ENCODE measurements at regions of chr9 and their contacts with region 1.

Region 1: DNA sequence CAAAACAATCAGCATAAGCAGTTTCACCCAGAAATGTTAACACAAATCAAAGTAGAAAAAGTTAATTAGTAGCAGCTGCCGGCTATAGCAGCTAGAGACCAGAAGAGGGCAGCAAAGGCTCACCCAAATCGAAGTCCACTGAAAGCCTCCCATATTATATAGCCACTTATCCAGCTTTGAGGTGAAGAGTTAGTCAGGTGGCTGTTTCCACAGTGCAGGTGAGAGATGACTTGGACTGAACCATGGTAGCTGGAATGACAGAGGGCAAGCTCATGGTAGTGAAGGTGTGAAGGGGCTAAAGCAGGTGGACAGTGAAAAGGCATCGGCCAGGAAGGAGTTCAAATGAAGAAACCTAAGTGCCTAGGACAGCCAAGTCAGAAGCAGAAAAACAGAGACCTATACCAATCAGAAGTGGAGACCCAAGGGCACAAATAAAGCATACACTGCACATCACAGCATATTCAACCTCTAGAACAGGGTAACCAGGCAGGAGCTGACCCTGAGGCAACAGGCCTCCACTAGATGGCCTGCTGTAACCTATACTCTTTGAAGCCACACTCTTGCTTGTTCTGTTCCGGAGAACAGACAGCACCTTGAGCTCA is 7.2 kb upstream of the RNF38 start:
- DNase-seq: peak; percentile 65
- ATAC-seq: peak; percentile 97
- H3K4me3 ChIP-seq: no peak overlapping the region
- H3K27ac ChIP-seq: no peak overlapping the region
- H3K4me1 ChIP-seq: no peaks in the 10 kb centered on the region; the same call in 1 of the 2 replicates
- H3K27me3 ChIP-seq: no peaks in the 10 kb centered on the region
- CTCF ChIP-seq: peak; percentile 94
- POLR2A ChIP-seq: no peak
- RAD21 ChIP-seq: peak; percentile 85

Region 2: DNA sequence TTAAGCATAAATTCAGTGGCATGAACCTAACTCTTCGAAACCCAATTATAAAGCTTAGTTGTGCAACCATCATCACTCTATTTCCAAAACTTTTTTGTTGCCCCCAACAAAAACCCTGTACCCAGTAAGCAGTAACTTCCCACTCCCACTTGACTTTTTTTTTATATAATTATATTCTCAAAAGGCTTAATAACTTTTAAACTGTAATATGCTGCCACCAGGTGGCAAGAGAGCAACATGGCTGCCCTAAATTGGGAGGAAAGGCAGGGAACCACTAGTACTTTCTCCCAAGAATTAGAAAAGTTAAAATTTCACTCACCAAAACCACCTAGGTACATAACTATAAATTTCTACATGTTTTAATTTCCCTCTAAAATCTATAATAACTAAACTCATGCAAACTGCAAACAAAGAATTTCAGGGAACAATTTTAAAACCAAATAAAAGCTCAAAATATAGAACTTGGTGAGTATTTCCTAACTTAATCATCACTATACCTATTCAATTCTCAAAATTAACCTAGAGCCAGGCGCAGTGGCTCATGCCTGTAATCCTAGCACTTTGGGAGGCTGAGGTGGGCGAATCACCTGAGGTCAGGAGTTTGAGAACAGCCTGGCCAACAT is 43.0 kb after region 1 on chr9:
- CTCF ChIA-PET with region 1: interaction called, 19 read pairs
- POLR2A ChIA-PET with region 1: no interaction called
- dilution Hi-C with region 1: no loop called
- in situ Hi-C with region 1: loop called (anchors 5 kb)
- intact Hi-C with region 1: loop called (anchors 1 kb)
- DNase-seq: peak; percentile 57
- ATAC-seq: peak; percentile 65; the same call in 1 of the 2 replicates
- H3K4me3 ChIP-seq: no peak overlapping the region
- H3K27ac ChIP-seq: no peak overlapping the region
- H3K4me1 ChIP-seq: peaks cover 2% of the 10 kb centered on the region; the same call in 1 of the 2 replicates
- H3K27me3 ChIP-seq: no peaks in the 10 kb centered on the region
- CTCF ChIP-seq: peak; percentile 79
- POLR2A ChIP-seq: no peak
- RAD21 ChIP-seq: peak; percentile 73

Region 3: GRCh38 chr9:36487482-36488388 is 80.5 kb after region 1 on chr9:
- CTCF ChIA-PET with region 1: interaction called, 7 read pairs
- POLR2A ChIA-PET with region 1: no interaction called
- dilution Hi-C with region 1: no loop called
- in situ Hi-C with region 1: no loop called
- intact Hi-C with region 1: loop called (anchors 1 kb)
- DNase-seq: peak; percentile 90
- ATAC-seq: peak; percentile 95
- H3K4me3 ChIP-seq: peak overlapping the region; percentile 98
- H3K27ac ChIP-seq: peak overlapping the region; percentile 85
- H3K4me1 ChIP-seq: peaks cover 7% of the 10 kb centered on the region
- H3K27me3 ChIP-seq: no peaks in the 10 kb centered on the region
- CTCF ChIP-seq: no peak
- POLR2A ChIP-seq: peak; percentile 65; the same call in 1 of the 2 replicates
- RAD21 ChIP-seq: no peak

Region 4: GRCh38 chr9:36560857-36561221 is 153.6 kb after region 1 on chr9:
- CTCF ChIA-PET with region 1: interaction called, 10 read pairs
- POLR2A ChIA-PET with region 1: no interaction called
- dilution Hi-C with region 1: no loop called
- in situ Hi-C with region 1: no loop called
- intact Hi-C with region 1: no loop called
- DNase-seq: peak; percentile 40
- ATAC-seq: peak; percentile 30
- H3K4me3 ChIP-seq: no peak overlapping the region
- H3K27ac ChIP-seq: no peak overlapping the region
- H3K4me1 ChIP-seq: peaks cover 5% of the 10 kb centered on the region; the same call in 1 of the 2 replicates
- H3K27me3 ChIP-seq: no peaks in the 10 kb centered on the region
- CTCF ChIP-seq: no peak
- POLR2A ChIP-seq: no peak
- RAD21 ChIP-seq: no peak

Region 5: GRCh38 chr9:36728651-36729520 is 321.7 kb after region 1 on chr9:
- CTCF ChIA-PET with region 1: interaction called, 11 read pairs
- POLR2A ChIA-PET with region 1: no interaction called
- dilution Hi-C with region 1: no loop called
- in situ Hi-C with region 1: loop called (anchors 10 kb)
- intact Hi-C with region 1: loop called (anchors 1 kb)
- DNase-seq: peak; percentile 78
- ATAC-seq: peak; percentile 91
- H3K4me3 ChIP-seq: no peak overlapping the region
- H3K27ac ChIP-seq: no peak overlapping the region
- H3K4me1 ChIP-seq: no peaks in the 10 kb centered on the region
- H3K27me3 ChIP-seq: no peaks in the 10 kb centered on the region; the same call in 1 of the 2 replicates
- CTCF ChIP-seq: peak; percentile 83
- POLR2A ChIP-seq: 0 out of 2 replicates have a peak, but pooled peaks have one; percentile 46
- RAD21 ChIP-seq: peak; percentile 92